ENCODE measurements at regions of chr12 and their contacts with region 1.

Region 1: GRCh38 chr12:110613771-110614684 is at the start of gene TCTN1:
- DNase-seq: peak; percentile 97 to 98
- ATAC-seq: peak; percentile 98 to 100 (median 99)
- H3K4me3 ChIP-seq: peak within 1 kb of the TSS; percentile 50 to 86 (median 72)
- H3K27ac ChIP-seq: peak within 1 kb of the TSS in 9 of 10 donors; percentile 52 to 88 (median 76)
- H3K4me1 ChIP-seq: peaks cover 0 to 19% (median 7%) of the 10 kb centered on the region in 9 donors
- H3K27me3 ChIP-seq: no peaks in the 10 kb centered on the region
- CTCF ChIP-seq: peak in 4 of 9 donors; percentile 9 to 33 (median 23)
- total RNA-seq, gene TCTN1: 14.2 to 31.9 (median 25.2) TPM

Region 2: GRCh38 chr12:110217996-110218674 is 395.9 kb before region 1 on chr12:
- intact Hi-C with region 1: no loop called
- DNase-seq: no peak
- ATAC-seq: no peak
- H3K4me3 ChIP-seq: no peak overlapping the region
- H3K27ac ChIP-seq: no peak overlapping the region
- H3K4me1 ChIP-seq: peaks cover 0 to 17% (median 8%) of the 10 kb centered on the region in 9 donors
- H3K27me3 ChIP-seq: no peaks in the 10 kb centered on the region
- CTCF ChIP-seq: no peak

Region 3: DNA sequence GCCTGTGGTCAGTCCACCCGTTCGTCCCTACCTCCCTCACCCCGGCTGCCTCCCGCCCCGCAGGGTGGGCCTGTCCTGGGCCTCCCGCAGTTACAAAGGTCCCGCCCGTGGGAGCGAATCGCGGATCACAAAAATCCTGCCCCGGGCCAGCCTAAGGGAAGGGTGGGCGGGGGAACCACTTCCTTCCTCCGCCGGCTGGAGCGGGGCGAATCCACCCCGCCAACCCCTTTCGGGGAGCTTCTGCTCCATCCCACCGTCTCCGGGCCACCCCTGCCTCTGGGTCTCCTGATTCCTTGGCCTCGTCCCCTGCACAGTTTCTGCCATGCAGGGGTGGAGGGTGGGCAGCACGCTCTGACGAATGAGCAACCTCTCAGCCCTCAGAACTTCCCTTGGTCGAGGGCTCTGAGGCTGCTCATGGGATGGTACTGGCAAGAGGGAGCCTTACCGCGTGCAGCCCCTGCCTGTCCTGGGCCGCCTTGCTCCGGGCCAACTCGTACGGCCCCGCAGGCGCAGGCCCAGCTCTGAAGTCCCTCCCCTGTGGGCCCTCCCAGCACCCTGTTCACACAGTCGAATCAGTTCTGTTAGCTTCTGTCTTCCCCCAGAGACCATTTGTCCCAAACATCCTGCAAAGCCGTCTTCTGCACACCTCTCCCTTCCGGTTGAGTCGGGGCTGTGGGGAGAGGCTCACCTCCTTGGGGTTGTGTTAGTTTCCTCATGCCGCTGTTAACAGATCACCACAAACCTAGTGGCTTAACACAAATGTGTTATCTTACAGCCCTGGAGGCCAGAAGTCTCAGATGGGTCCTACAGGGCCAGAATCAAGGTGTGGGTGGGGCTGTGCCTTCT is 75.5 kb after region 1 on chr12:
- intact Hi-C with region 1: loop called in 2 of 10 experiments (anchors 5 to 10 kb)
- DNase-seq: peak; percentile 72 to 75
- ATAC-seq: peak; percentile 62 to 83 (median 76)
- H3K4me3 ChIP-seq: peak overlapping the region; percentile 72 to 93 (median 83)
- H3K27ac ChIP-seq: peak overlapping the region; percentile 71 to 88 (median 82)
- H3K4me1 ChIP-seq: peaks cover 9 to 73% (median 27%) of the 10 kb centered on the region in 9 donors
- H3K27me3 ChIP-seq: no peaks in the 10 kb centered on the region
- CTCF ChIP-seq: no peak